Common myeloid progenitor, CD34-positive (primary cell): ENCODE measurements at regions of chr6 and their contacts with region 1.

Region 1: GRCh38 chr6:32413427-32414047 is 6.6 kb upstream of the BTNL2 start:
- DNase-seq: peak; percentile 84 to 90 (median 88)
- H3K4me3 ChIP-seq: no peak overlapping the region
- H3K27ac ChIP-seq: no peak overlapping the region
- H3K4me1 ChIP-seq: peaks cover 0 to 4% (median 3%) of the 10 kb centered on the region in 4 experiments
- H3K27me3 ChIP-seq: peaks cover 2 to 8% (median 5%) of the 10 kb centered on the region in 5 experiments

Region 2: DNA sequence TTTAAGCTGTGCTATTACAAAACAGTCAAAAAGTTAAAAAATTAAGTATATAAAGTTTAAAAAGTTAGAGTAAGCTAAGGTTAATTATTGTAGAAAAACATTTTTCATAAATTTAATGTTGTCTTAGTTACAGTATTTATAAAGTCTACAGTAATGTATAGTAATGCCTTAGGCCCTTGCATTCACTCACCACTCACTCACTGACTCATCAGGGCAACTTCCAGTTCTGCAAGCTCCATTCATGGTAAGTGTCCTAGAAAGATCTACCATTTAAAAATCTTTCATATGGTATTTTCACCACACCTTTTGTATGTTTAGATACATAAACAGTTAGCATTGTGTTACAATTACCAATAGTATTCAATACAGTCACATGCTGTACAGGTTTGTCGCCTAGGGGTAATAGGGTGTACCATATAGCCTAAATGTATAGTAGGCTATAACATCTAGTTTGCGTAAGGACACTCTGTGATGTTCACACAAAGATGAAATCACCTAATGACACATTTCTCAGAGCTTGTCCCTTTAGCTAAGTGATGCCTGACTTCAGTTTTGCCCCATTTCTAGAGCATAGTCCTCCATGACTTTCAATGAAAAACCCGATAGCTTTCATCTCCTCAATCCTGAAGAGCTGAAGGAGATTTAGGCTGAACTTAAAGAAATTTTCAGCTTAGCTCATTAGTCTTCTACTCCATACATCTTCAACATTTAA is 11.2 kb after region 1 on chr6:
- CTCF ChIA-PET with region 1: interaction called, 24 read pairs
- POLR2A ChIA-PET with region 1: no interaction called
- DNase-seq: no peak
- H3K4me3 ChIP-seq: no peak overlapping the region
- H3K27ac ChIP-seq: no peak overlapping the region
- H3K4me1 ChIP-seq: peaks cover 0 to 1% (median 0%) of the 10 kb centered on the region in 4 experiments
- H3K27me3 ChIP-seq: no peaks in the 10 kb centered on the region

Region 3: DNA sequence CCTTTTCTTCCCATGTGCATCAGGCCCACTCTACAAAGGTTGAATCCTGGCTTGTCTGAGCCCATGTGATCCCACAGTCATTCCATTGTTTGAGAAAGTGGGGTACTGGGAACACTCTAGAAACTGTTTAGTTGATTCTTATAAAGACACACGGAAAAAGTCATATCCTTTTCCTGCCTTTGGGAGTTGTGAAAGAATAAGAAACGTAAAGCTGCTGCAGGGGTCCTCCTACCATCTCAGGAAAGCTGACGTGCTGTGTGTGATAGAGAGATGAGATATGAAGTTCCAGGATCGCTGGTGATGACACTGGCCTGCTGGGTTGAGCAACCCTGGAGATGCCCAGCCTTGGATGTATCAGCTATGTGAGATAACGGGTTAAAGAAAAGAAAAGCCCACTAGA is 137.9 kb after region 1 on chr6:
- CTCF ChIA-PET with region 1: no interaction called
- POLR2A ChIA-PET with region 1: no interaction called
- DNase-seq: no peak
- H3K4me3 ChIP-seq: no peak overlapping the region
- H3K27ac ChIP-seq: no peak overlapping the region
- H3K4me1 ChIP-seq: no peaks in the 10 kb centered on the region
- H3K27me3 ChIP-seq: no peaks in the 10 kb centered on the region

Region 4: DNA sequence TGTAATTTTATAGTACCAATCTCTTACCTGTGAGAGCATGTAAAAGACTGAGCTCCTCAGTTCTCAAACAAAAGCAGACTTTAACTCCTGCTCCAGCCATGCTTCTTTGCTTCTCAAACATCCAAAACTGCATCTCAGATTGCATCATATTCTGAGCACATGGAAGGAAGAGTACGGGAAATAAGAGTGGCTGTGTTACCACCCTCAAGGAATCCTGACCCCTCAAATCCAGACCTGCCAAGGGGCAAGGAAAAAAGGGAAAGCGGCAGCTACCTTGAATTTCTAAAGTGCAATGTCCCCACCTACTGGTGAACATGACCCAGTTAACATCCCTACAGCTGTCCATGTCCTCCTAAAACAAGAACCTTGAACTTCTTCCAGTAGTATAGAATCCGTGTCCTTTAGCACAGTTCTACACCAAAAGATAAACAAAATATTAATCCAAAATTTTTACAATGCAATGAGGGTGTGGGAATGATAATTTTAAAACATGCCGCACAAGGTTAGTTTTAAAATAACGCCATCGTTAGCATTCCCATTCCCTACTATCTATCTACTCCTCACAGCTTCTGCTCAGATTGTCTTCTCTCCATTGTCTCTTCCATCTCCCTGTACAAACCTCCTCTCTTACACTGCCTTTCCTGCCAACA is 287.0 kb after region 1 on chr6:
- CTCF ChIA-PET with region 1: interaction called, 13 read pairs
- POLR2A ChIA-PET with region 1: no interaction called
- DNase-seq: peak; percentile 51 to 63 (median 60)
- H3K4me3 ChIP-seq: peak overlapping the region in 3 of 7 experiments; percentile 23 to 53 (median 36)
- H3K27ac ChIP-seq: no peak overlapping the region
- H3K4me1 ChIP-seq: peaks cover 0 to 4% (median 2%) of the 10 kb centered on the region in 4 experiments
- H3K27me3 ChIP-seq: peaks cover 0 to 6% (median 0%) of the 10 kb centered on the region in 5 experiments

Region 5: GRCh38 chr6:32796848-32797776 is 383.6 kb after region 1 on chr6:
- CTCF ChIA-PET with region 1: interaction called, 14 read pairs
- POLR2A ChIA-PET with region 1: no interaction called
- DNase-seq: peak; percentile 67 to 89 (median 84)
- H3K4me3 ChIP-seq: peak overlapping the region in 6 of 7 experiments; percentile 52 to 79 (median 61)
- H3K27ac ChIP-seq: no peak overlapping the region
- H3K4me1 ChIP-seq: peaks cover 14 to 43% (median 27%) of the 10 kb centered on the region in 4 experiments
- H3K27me3 ChIP-seq: no peaks in the 10 kb centered on the region